ENCODE measurements at regions of chrX and their contacts with region 1.

Region 1: DNA sequence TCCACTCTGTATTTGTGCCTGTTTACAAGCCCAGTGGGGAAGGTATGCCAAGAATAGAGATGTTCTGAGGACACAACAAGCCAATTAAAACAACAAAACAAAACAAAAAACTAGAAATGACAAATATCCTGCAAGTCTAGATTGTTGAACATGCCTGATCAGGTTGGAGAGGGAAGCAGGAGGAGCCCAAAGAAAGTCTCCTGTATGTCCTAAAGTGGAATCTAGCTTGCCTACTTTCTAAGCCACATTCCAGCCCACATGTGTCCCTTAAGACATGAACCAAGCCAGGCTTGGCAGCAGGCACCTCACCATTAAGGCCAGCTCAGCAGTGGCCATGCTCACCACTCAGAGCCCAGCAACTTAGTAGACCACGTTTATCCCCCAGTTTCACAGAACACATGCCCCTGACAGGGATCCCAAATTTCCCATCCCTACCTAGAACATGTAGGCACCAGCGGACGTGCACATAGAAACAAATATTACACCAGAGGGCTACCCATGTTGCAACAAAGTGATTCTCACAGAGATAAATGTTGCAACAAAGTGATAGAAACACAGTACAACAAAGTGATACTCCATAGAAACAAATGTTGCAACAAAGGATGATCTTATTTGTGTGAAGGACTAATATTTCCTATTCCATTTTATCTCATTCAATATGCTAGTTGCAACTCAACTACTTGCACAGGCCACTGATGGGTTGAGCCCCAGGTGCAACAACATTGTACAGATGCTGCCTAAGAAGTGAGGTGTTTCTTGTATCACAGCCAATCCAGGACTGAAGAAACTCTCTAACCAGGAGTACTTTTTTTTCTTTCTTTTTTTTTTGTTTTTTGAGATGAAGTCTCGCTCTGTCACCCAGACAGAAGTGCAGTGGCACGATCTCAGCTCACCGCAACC is 48.2 kb downstream of the CD99L2 start:
- DNase-seq: no peak
- ATAC-seq: no peak
- H3K4me3 ChIP-seq: no peak overlapping the region
- H3K4me3 Mint-ChIP-seq: no peak overlapping the region
- H3K27ac ChIP-seq: no peak overlapping the region
- H3K27ac Mint-ChIP-seq: no peak overlapping the region
- H3K4me1 ChIP-seq: no peaks in the 10 kb centered on the region
- H3K4me1 Mint-ChIP-seq: peaks cover 13% of the 10 kb centered on the region
- H3K27me3 ChIP-seq: no peaks in the 10 kb centered on the region
- H3K27me3 Mint-ChIP-seq: no peaks in the 10 kb centered on the region
- CTCF ChIP-seq: no peak

Region 2: DNA sequence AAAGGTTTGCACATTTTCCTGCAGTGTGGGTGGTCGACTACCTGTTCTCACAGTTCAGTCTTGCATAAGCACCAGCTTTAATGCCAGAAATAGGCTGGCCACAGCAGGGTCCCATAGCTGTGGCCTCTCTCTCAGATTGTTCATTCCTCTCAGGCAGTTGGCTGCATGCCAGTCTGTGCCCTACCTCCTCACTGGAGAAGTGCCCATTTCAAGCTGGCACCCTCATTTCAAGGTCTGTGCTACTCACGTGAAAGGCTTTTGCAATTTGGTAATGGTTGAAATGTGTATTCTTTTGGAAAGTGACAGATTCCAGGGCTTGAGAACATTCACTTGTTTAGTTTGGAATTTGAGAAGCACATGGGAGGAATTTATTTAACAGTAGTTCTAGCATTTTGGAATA is 186.0 kb before region 1 on chrX:
- CTCF ChIA-PET with region 1: no interaction called
- POLR2A ChIA-PET with region 1: no interaction called
- intact Hi-C with region 1: no loop called
- DNase-seq: no peak
- ATAC-seq: no peak
- H3K4me3 ChIP-seq: no peak overlapping the region
- H3K4me3 Mint-ChIP-seq: no peak overlapping the region
- H3K27ac ChIP-seq: no peak overlapping the region
- H3K27ac Mint-ChIP-seq: no peak overlapping the region
- H3K4me1 ChIP-seq: no peaks in the 10 kb centered on the region
- H3K4me1 Mint-ChIP-seq: no peaks in the 10 kb centered on the region
- H3K27me3 ChIP-seq: no peaks in the 10 kb centered on the region
- H3K27me3 Mint-ChIP-seq: no peaks in the 10 kb centered on the region
- CTCF ChIP-seq: no peak

Region 3: GRCh38 chrX:150826981-150827380 is 23.3 kb before region 1 on chrX:
- CTCF ChIA-PET with region 1: no interaction called
- POLR2A ChIA-PET with region 1: no interaction called
- intact Hi-C with region 1: no loop called
- DNase-seq: no peak
- ATAC-seq: no peak
- H3K4me3 ChIP-seq: no peak overlapping the region
- H3K4me3 Mint-ChIP-seq: no peak overlapping the region
- H3K27ac ChIP-seq: no peak overlapping the region
- H3K27ac Mint-ChIP-seq: no peak overlapping the region
- H3K4me1 ChIP-seq: no peaks in the 10 kb centered on the region
- H3K4me1 Mint-ChIP-seq: peaks cover 2% of the 10 kb centered on the region
- H3K27me3 ChIP-seq: no peaks in the 10 kb centered on the region
- H3K27me3 Mint-ChIP-seq: no peaks in the 10 kb centered on the region
- CTCF ChIP-seq: no peak

Region 4: GRCh38 chrX:150873616-150874015 is 23.3 kb after region 1 on chrX:
- CTCF ChIA-PET with region 1: no interaction called
- POLR2A ChIA-PET with region 1: no interaction called
- intact Hi-C with region 1: loop called in 1 of 2 experiments (anchors 1 kb)
- DNase-seq: no peak
- ATAC-seq: no peak
- H3K4me3 ChIP-seq: no peak overlapping the region
- H3K4me3 Mint-ChIP-seq: no peak overlapping the region
- H3K27ac ChIP-seq: no peak overlapping the region
- H3K27ac Mint-ChIP-seq: no peak overlapping the region
- H3K4me1 ChIP-seq: no peaks in the 10 kb centered on the region
- H3K4me1 Mint-ChIP-seq: peaks cover 25% of the 10 kb centered on the region
- H3K27me3 ChIP-seq: no peaks in the 10 kb centered on the region
- H3K27me3 Mint-ChIP-seq: no peaks in the 10 kb centered on the region
- CTCF ChIP-seq: no peak